Right ventricle myocardium inferior (tissue), 1 donor: ENCODE measurements at regions of chr19 and their contacts with region 1.

Region 1: DNA sequence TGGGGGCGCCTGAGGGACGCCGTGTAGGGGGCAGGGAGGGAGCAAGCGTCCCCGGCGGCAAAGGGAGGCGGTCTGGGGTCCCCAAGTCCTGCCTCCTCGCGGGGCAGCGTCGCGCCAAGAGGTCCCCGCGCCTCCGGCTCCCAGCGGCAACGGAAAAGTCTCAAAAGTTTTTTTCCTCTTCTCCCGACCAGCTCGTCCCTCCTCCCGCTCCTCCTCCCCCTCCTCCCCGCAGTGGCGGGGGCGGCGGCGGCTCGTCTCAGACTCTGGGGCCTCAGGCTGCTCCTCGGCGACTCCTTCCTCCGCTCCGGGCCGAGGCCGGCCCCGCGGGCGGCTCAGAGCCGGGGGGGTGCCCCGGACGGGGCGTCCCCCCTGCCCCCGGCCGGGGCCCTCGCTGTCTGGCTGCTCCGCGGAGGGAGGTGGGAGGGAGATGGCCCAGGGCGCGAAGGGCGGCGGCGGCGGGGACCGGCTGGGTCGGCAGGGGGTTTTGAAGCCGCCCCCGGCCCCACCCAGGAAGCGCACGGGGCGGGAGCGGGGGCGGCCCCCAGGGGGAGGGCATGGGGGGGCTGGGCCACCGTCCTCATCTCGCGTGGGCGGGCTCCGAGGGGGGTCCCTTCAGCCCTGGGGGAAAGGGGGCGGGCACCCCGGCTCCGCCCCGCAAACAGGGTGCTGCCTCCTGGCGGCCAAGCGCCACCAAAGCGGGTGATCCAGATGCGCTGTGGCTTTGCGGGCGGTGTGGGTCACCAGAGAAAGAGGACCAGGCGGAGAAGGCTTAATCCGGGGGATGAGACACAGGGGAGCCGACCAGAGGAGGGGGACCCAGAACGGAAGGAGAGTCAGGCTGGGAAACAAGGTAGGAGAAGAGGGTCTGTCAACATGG is at the start of gene TGFB1:
- DNase-seq: peak; percentile 96
- ATAC-seq: peak; percentile 78
- total RNA-seq, gene TGFB1: 15.0 TPM

Region 2: DNA sequence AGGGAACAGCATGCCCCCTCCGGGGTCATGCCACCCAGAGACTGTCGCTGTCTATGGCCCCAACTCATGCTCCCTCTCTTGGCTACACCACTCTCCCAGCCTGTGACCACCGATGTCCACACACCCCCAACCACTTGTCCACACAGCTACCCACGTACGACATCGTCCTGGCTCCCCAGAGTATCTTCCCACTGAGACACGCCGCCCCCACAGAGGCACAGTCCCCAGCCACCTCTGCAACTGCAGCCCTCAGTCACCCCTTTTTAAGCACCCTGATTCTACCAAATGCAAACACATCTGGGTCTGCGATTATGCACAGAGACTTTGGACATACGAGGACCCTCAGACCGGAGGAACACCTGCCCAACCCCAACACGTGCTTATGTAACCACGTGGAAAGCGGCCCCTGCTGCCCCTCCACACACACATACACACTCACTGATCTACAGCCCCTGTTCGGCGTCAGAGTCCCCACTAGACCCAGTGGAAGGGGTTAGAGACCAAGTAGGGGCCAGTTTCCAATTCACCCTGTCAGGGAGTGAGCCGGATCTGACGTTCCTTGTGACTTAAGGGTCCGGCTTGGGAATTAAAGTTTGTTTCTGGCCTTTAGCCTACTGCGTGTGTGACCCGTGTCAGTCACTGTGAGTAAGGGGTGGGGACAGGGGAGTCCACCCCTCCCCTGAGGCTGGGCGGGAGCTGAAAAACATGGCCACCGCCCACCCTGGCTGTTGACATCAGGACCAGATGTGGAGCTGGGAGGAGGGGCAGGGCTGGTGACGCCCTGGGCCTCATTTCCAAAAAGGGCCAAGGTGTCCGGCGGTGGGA is 146.6 kb before region 1 on chr19:
- intact Hi-C with region 1: loop called (anchors 5 kb)
- DNase-seq: peak; percentile 91
- ATAC-seq: peak; percentile 91

Region 3: GRCh38 chr19:41310033-41310758 is 43.5 kb before region 1 on chr19 and contains the start of gene CCDC97:
- intact Hi-C with region 1: loop called (anchors 1 kb)
- DNase-seq: peak; percentile 93
- ATAC-seq: peak; percentile 83
- total RNA-seq, gene CCDC97: 14.6 TPM

Region 4: GRCh38 chr19:41321600-41322270 is 32.0 kb before region 1 on chr19:
- intact Hi-C with region 1: loop called (anchors 1 kb)
- DNase-seq: peak; percentile 76
- ATAC-seq: no peak

Region 5: DNA sequence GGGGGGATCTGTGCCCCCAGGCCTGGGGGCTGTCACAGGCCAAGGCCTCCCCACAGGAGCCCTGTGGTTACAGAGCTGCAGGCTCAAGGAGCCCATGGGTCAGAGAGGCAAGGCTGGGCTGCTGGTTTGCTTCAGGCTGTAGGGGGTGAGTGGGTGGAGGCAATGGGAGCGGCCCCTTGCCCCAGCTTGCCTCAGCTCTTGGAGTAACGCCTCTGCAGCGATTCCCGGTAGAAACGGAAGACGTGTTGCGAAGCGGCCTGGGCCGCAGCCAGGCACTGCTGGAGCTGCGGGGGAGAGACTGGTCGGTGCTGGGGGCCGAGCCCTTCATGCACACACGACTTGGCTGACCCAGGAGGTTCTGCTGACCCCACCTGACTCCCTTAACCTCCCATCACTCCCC is 32.7 kb after region 1 on chr19:
- intact Hi-C with region 1: no loop called
- DNase-seq: no peak
- ATAC-seq: peak; percentile 37